ENCODE measurements at regions of chr1 and their contacts with region 1.

Region 1: DNA sequence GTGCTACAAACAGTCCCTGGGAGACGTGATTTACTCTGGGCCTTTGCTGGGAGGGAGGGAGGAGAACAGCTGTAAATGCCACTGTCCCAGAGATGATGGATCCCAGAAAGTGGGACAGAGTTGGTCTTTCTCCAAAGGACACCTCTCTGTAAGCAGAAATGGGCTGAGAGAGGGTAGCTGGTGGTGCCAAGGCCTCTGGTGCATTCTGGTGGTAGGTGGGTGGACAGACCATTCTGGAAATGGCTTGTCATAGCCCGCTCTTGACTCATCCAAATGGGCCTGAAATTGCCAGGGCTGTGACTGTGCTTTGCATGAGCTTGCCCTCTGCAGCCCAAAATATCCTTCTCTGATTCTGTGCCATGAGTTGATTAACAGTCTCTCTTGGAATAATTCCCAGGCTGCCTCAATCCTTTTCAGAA is 36.1 kb downstream of the CCDC185 start:
- DNase-seq: peak; percentile 23 to 84
- H3K4me3 ChIP-seq: no peak overlapping the region
- H3K27ac ChIP-seq: peak overlapping the region; percentile 60 to 75
- H3K4me1 ChIP-seq: peaks cover 15 to 36% of the 10 kb centered on the region in 2 donors
- H3K27me3 ChIP-seq: no peaks in the 10 kb centered on the region
- CTCF ChIP-seq: peak in 1 of 3 experiments; percentile 5

Region 2: DNA sequence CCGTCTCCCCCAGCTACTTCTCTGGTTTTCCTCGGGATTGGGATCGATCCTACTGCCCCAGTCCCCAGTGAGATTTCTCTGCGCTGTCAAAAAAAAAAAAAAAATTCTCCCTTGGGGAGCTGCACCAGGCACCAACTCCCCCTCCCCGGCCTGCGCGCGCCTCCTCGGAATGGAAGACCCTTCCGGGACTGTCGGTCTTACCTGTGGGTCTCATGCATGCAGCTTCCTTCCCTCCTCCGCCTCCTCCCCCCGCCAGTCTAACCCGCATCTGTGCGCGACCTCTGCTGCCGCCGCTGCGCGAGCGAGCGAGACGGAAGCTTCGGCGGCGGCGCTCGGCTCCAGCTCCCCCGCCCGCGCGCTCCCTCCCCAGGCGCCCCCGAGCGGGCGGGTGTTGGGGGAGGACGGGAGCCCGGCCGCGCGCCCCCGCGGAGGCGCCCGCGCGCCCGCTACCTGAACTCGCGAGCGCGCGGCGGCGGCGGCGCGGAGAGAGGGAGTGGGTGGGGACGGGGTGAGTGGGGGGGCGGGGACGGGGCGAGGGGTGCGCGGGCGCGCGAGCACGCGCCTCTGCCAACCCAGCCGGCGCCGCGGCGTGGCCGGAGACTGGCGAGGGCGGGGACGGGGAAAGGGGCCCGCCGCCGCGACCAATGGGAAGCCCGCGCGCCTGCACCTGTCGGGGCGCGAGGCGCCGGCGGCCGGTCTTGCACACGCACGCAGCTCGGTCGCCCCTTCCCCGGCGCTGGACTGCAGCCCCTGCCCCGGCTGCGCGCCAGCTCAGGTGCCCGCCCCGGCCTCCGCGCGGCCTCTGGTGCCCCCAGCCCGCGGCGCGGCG is 65.3 kb before region 1 on chr1 and contains the start of gene SUSD4:
- intact Hi-C with region 1: loop called (anchors 5 kb)
- DNase-seq: peak in 1 of 2 donors; percentile 66
- H3K4me3 ChIP-seq: peak within 1 kb of the TSS; percentile 64 to 70
- H3K27ac ChIP-seq: no peak within 1 kb of the TSS
- H3K4me1 ChIP-seq: peaks cover 9 to 12% of the 10 kb centered on the region in 2 donors
- H3K27me3 ChIP-seq: no peaks in the 10 kb centered on the region
- CTCF ChIP-seq: no peak
- total RNA-seq, gene SUSD4: not detected